K562 (cell line): ENCODE measurements at regions of chr2 and their contacts with region 1.

Region 1: DNA sequence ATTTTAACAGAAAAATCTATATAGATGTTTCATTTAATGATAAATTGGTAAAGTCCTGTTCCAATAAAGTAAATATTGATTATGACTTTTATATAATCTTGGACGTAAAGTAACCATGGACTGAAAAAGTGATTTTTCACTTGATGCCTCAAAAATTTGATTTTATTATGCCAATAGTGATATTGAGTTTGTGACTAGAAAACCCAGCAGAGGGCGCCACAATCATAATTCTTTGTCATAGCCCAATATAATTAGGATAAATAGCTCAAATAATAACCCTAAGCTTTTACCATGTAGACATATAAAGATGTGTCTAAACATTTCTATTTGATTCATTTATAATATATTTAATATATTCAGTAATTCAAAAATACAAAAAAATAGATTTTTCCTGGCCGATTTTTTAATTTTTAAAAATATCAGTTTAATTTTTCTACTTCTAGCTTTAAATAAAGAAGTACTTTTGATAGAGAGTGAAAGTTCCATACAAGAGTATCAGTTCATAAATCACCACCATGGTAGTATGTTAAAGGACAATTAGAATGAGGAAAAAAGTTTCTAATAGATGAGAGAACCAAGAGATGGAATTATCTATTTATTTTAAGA is 30.7 kb downstream of the CAMKMT start:
- DNase-seq: peak in 3 of 4 experiments; percentile 8 to 57 (median 13)
- ATAC-seq: no peak
- H3K4me3 ChIP-seq: no peak overlapping the region
- H3K27ac ChIP-seq: no peak overlapping the region
- H3K4me1 ChIP-seq: no peaks in the 10 kb centered on the region; a peak in 1 of 5 replicates
- H3K27me3 ChIP-seq: no peaks in the 10 kb centered on the region
- CTCF ChIP-seq: peak in 2 of 3 experiments; percentile 63 to 71; a peak in 4 of 6 replicates
- EP300 ChIP-seq: no peak
- POLR2A ChIP-seq: no peak
- RAD21 ChIP-seq: peak; percentile 34 to 52

Region 2: GRCh38 chr2:43699761-43700160 is 692.7 kb before region 1 on chr2:
- CTCF ChIA-PET with region 1: no interaction called
- POLR2A ChIA-PET with region 1: no interaction called
- in situ Hi-C with region 1: no loop called
- intact Hi-C with region 1: no loop called
- DNase-seq: no peak
- ATAC-seq: peak; percentile 31; the same call in 2 of the 3 replicates
- H3K4me3 ChIP-seq: no peak overlapping the region
- H3K27ac ChIP-seq: no peak overlapping the region
- H3K4me1 ChIP-seq: peaks cover 3 to 9% of the 10 kb centered on the region in 2 experiments; a peak in 2 of 5 replicates
- H3K27me3 ChIP-seq: no peaks in the 10 kb centered on the region
- CTCF ChIP-seq: no peak
- EP300 ChIP-seq: no peak
- POLR2A ChIP-seq: no peak
- RAD21 ChIP-seq: no peak

Region 3: GRCh38 chr2:44674473-44675284 is 282.2 kb after region 1 on chr2:
- CTCF ChIA-PET with region 1: no interaction called
- POLR2A ChIA-PET with region 1: no interaction called
- in situ Hi-C with region 1: no loop called
- intact Hi-C with region 1: no loop called
- DNase-seq: no peak
- ATAC-seq: no peak
- H3K4me3 ChIP-seq: no peak overlapping the region
- H3K27ac ChIP-seq: no peak overlapping the region
- H3K4me1 ChIP-seq: no peaks in the 10 kb centered on the region
- H3K27me3 ChIP-seq: peaks cover 0 to 4% of the 10 kb centered on the region in 2 experiments; a peak in 2 of 5 replicates
- CTCF ChIP-seq: no peak
- EP300 ChIP-seq: no peak
- POLR2A ChIP-seq: no peak
- RAD21 ChIP-seq: no peak

Region 4: GRCh38 chr2:44715671-44716081 is 323.2 kb after region 1 on chr2:
- CTCF ChIA-PET with region 1: no interaction called
- POLR2A ChIA-PET with region 1: no interaction called
- in situ Hi-C with region 1: no loop called
- intact Hi-C with region 1: loop called (anchors 5 kb)
- DNase-seq: no peak
- ATAC-seq: no peak
- H3K4me3 ChIP-seq: no peak overlapping the region
- H3K27ac ChIP-seq: no peak overlapping the region
- H3K4me1 ChIP-seq: no peaks in the 10 kb centered on the region
- H3K27me3 ChIP-seq: no peaks in the 10 kb centered on the region
- CTCF ChIP-seq: peak in 2 of 3 experiments; percentile 10 to 33; a peak in 2 of 6 replicates
- EP300 ChIP-seq: no peak
- POLR2A ChIP-seq: no peak
- RAD21 ChIP-seq: peak in 1 of 2 experiments; percentile 16; a peak in 1 of 4 replicates

Region 5: GRCh38 chr2:44778671-44779476 is 386.4 kb after region 1 on chr2:
- CTCF ChIA-PET with region 1: no interaction called
- POLR2A ChIA-PET with region 1: no interaction called
- in situ Hi-C with region 1: no loop called
- intact Hi-C with region 1: no loop called
- DNase-seq: no peak
- ATAC-seq: peak; percentile 54
- H3K4me3 ChIP-seq: no peak overlapping the region
- H3K27ac ChIP-seq: no peak overlapping the region
- H3K4me1 ChIP-seq: no peaks in the 10 kb centered on the region
- H3K27me3 ChIP-seq: peaks cover 20 to 25% of the 10 kb centered on the region in 2 experiments; a peak in 4 of 5 replicates
- CTCF ChIP-seq: no peak
- EP300 ChIP-seq: no peak
- POLR2A ChIP-seq: no peak
- RAD21 ChIP-seq: no peak

Region 6: DNA sequence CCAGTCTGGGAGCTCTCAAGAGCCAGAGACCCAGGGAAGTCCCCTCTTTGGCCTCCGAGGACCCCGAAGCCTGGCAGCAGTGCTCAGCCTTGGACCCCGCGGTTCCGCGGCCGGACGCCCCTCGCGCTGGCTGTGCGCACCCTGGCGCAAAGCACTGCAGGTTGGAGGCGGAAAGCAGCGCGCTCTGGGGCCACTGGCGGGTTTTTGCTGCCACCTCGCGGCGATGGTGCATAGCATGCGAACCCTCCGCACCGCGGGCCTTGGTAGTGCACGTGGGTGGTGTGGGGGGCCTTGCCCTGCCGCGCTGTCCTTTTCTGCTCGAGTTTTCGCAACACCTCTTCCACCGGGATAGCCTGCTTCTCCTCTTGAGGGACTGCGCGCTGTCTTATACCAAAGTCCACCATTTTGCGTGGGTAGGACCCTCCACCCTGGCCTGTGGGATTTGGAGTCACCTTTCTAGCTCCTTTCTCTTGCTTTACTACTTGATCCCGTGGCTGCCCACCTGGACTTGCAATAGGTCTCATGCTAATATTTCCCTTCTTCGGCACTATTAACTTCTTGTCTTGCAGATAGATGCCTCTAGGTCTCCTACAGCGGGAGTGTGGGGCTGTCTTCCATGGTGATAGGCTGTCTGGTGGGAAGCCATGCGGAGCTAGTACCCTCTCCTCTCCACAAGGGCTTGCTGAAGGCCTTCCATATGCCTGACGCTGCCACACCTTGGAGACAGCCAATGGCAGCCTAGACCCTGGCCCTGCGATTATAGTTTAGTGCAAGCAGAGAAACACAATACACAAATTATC is 563.4 kb after region 1 on chr2:
- CTCF ChIA-PET with region 1: interaction called, 3 read pairs
- POLR2A ChIA-PET with region 1: no interaction called
- in situ Hi-C with region 1: no loop called
- intact Hi-C with region 1: loop called (anchors 1 kb)
- DNase-seq: peak; percentile 75 to 78 (median 78)
- ATAC-seq: peak; percentile 93
- H3K4me3 ChIP-seq: no peak overlapping the region
- H3K27ac ChIP-seq: no peak overlapping the region
- H3K4me1 ChIP-seq: peaks cover 0 to 26% of the 10 kb centered on the region in 2 experiments; a peak in 3 of 5 replicates
- H3K27me3 ChIP-seq: peaks cover 19 to 66% of the 10 kb centered on the region in 2 experiments; a peak in 4 of 5 replicates
- CTCF ChIP-seq: peak; percentile 79 to 97 (median 87)
- EP300 ChIP-seq: no peak
- POLR2A ChIP-seq: no peak
- RAD21 ChIP-seq: peak; percentile 83 to 92

Region 7: DNA sequence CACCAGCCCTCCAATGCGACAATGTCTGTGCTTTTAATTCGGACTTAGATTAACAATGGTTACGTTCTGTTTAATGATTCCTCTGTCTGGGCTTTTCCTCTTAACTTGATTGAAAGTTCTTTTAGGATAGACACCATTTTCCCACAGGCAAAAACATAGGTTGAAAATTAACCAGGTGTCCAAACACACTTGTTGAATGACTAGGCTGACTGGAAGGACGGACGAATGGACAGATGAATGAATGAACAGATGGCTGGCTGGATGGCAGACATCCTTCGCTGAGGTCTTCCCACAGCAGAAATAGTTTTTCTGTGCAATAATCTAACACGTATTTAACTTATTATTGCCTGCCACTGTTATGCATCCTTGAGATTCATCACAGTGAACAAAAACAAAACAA is 919.8 kb after region 1 on chr2:
- CTCF ChIA-PET with region 1: no interaction called
- POLR2A ChIA-PET with region 1: no interaction called
- in situ Hi-C with region 1: no loop called
- intact Hi-C with region 1: no loop called
- DNase-seq: no peak
- ATAC-seq: no peak
- H3K4me3 ChIP-seq: no peak overlapping the region
- H3K27ac ChIP-seq: no peak overlapping the region
- H3K4me1 ChIP-seq: no peaks in the 10 kb centered on the region
- H3K27me3 ChIP-seq: peaks cover 0 to 28% of the 10 kb centered on the region in 2 experiments; a peak in 3 of 5 replicates
- CTCF ChIP-seq: no peak
- EP300 ChIP-seq: no peak
- POLR2A ChIP-seq: no peak
- RAD21 ChIP-seq: no peak